AG04449 (cell line): ENCODE measurements at regions of chr12 and their contacts with region 1.

Region 1: GRCh38 chr12:71685914-71686665 is at the start of gene TMEM19:
- DNase-seq: peak; percentile 24
- H3K4me3 ChIP-seq: peak within 1 kb of the TSS; percentile 90
- CTCF ChIP-seq: peak; percentile 31

Region 2: GRCh38 chr12:71663561-71664294 is 22.4 kb before region 1 on chr12 and contains the start of gene ZFC3H1:
- CTCF ChIA-PET with region 1: interaction called, 15 read pairs
- POLR2A ChIA-PET with region 1: interaction called, 33 read pairs
- DNase-seq: peak; percentile 99
- H3K4me3 ChIP-seq: peak within 1 kb of the TSS; percentile 88
- CTCF ChIP-seq: peak; percentile 59

Region 3: DNA sequence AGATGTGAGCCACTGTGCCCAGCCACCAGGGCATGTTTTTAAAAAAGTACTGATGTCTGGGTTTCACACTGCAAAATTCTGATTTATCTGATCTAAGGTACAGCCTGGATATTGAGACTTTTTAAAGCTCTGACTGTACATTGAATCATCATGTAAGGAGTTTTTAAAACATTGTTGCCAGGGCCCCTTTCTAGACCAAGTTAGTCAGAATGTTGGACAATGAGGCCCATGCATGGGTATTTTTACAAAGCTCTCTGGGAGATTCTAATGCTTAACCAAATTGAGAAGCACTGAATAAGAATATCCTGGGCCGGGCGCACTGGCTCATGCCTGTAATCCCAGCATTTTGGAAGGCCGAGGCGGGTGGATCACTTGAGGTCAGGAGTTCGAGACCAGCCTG is 16.5 kb after region 1 on chr12:
- CTCF ChIA-PET with region 1: interaction called, 10 read pairs
- POLR2A ChIA-PET with region 1: no interaction called
- DNase-seq: no peak
- H3K4me3 ChIP-seq: no peak overlapping the region
- CTCF ChIP-seq: no peak

Region 4: GRCh38 chr12:72011374-72011773 is 325.3 kb after region 1 on chr12:
- CTCF ChIA-PET with region 1: no interaction called
- POLR2A ChIA-PET with region 1: no interaction called
- DNase-seq: no peak
- H3K4me3 ChIP-seq: no peak overlapping the region
- CTCF ChIP-seq: no peak